ENCODE measurements at regions of chr2 and their contacts with region 1.

Region 1: DNA sequence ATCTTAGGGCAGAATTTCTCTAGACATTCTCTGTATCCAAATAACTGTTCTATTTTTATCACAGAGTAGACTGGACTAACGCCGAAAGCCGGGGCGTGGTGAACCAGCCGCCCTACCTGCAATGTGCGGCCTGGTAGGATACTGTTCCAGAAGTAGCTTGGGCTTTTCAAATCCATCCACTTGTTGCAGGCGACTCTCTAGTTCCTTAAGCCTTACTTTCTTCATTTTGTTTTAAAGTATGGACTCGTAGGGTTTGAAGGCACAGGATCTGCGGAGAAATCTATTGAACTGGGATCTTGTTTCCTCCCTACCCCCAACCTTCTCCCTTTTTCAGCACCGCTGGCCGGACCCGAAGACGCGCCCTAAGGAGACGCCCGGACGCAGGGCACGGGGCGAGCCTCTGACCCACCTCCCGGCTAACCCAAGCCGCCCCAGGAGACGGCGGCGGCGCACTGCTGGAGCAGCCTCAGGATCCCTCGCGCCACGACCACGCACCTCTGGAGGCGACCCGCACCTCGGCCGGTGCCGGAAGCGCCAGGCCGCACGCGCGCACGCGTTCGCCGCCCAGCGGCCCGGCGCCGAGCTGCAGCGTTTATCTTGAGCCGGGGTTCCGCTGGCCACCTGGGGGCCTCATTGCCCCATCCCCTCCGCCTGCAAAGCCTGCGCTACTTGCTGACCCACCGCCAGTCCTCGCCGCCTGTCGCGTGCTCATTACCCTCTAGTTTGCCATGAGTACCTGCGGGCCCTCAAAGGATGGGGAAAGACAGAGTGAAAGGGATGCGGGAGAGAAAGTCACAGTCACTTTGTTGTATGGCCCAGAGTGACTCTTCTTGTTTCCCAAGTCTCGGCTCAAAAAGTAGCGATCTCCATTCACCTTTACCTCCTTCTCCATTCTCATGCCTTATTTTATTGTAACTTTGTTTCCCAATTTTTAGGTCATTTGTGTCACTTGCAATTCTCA is at the start of gene METTL5:
- DNase-seq: peak; percentile 55 to 90 (median 71)
- ATAC-seq: peak; percentile 80
- H3K4me3 ChIP-seq: peak within 1 kb of the TSS; percentile 80
- H3K4me3 Mint-ChIP-seq: peak within 1 kb of the TSS; percentile 82 to 99 (median 91)
- H3K27ac ChIP-seq: peak within 1 kb of the TSS; percentile 85
- H3K27ac Mint-ChIP-seq: peak within 1 kb of the TSS; percentile 84 to 96 (median 89)
- H3K4me1 ChIP-seq: peaks cover 19 to 28% of the 10 kb centered on the region in 2 donors
- H3K4me1 Mint-ChIP-seq: peaks cover 46 to 75% (median 65%) of the 10 kb centered on the region in 7 donors
- H3K27me3 ChIP-seq: no peaks in the 10 kb centered on the region
- H3K27me3 Mint-ChIP-seq: no peaks in the 10 kb centered on the region
- total RNA-seq, gene METTL5: 21.1 to 52.9 (median 44.2) TPM

Region 2: DNA sequence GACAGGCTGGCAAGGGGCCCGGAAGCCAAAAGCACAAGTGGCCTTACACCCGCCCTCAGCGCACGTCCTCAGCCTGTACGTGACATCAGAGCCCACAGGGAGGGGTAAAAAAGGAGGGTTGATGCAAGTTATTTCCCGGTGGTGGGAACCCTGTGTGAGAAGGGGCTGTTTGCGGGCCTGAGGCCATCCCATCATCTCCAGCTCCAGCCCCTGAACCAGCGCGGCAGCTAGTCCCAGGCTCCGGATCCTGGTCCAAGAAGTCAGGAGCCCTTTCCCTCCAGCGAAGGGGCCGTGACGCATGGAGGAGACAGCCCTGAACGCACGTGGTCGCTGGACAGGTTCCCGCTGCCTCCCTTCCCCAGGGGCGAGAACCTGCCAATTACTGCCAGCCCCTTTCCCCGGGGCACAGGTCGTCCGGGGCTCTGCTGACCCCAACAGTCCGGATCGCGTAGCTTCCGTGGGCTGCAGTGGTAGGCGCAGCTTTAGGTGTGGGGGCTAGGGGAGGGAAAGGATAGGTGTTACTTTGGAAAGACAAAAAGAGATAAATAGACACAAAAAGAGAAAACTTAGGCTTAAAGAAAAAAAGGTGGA is 461.0 kb before region 1 on chr2:
- CTCF ChIA-PET with region 1: no interaction called
- POLR2A ChIA-PET with region 1: no interaction called
- intact Hi-C with region 1: loop called (anchors 10 kb)
- DNase-seq: peak in 8 of 9 donors; percentile 14 to 49 (median 38)
- ATAC-seq: peak; percentile 58
- H3K4me3 ChIP-seq: peak overlapping the region; percentile 89
- H3K4me3 Mint-ChIP-seq: peak overlapping the region; percentile 87 to 98 (median 94)
- H3K27ac ChIP-seq: no peak overlapping the region
- H3K27ac Mint-ChIP-seq: peak overlapping the region in 4 of 9 donors; percentile 14 to 88 (median 55)
- H3K4me1 ChIP-seq: peaks cover 11 to 18% of the 10 kb centered on the region in 2 donors
- H3K4me1 Mint-ChIP-seq: peaks cover 17 to 37% (median 29%) of the 10 kb centered on the region in 7 donors
- H3K27me3 ChIP-seq: peaks cover 4 to 15% of the 10 kb centered on the region in 2 donors
- H3K27me3 Mint-ChIP-seq: peaks cover 42 to 60% (median 49%) of the 10 kb centered on the region in 5 donors

Region 3: GRCh38 chr2:169573160-169573973 is 251.3 kb before region 1 on chr2 and contains the start of gene FASTKD1:
- CTCF ChIA-PET with region 1: no interaction called
- POLR2A ChIA-PET with region 1: no interaction called
- intact Hi-C with region 1: loop called (anchors 1 kb)
- DNase-seq: peak; percentile 55 to 88 (median 76)
- ATAC-seq: peak; percentile 100
- H3K4me3 ChIP-seq: peak within 1 kb of the TSS; percentile 93
- H3K4me3 Mint-ChIP-seq: peak within 1 kb of the TSS; percentile 88 to 99 (median 94)
- H3K27ac ChIP-seq: peak within 1 kb of the TSS; percentile 80
- H3K27ac Mint-ChIP-seq: peak within 1 kb of the TSS; percentile 74 to 95 (median 91)
- H3K4me1 ChIP-seq: peaks cover 4 to 5% of the 10 kb centered on the region in 2 donors
- H3K4me1 Mint-ChIP-seq: peaks cover 14 to 32% (median 24%) of the 10 kb centered on the region in 7 donors
- H3K27me3 ChIP-seq: no peaks in the 10 kb centered on the region
- H3K27me3 Mint-ChIP-seq: peaks cover 0 to 4% (median 0%) of the 10 kb centered on the region in 5 donors
- total RNA-seq, gene FASTKD1: 13.5 to 43.5 (median 31.0) TPM

Region 4: GRCh38 chr2:169694113-169694903 is 130.3 kb before region 1 on chr2 and contains the starts of genes CFAP210 and PHOSPHO2:
- CTCF ChIA-PET with region 1: interaction called, 4 read pairs
- POLR2A ChIA-PET with region 1: no interaction called
- intact Hi-C with region 1: loop called (anchors 1 kb)
- DNase-seq: peak; percentile 96 to 99 (median 98)
- ATAC-seq: peak; percentile 96
- H3K4me3 ChIP-seq: peak within 1 kb of the TSS; percentile 61
- H3K4me3 Mint-ChIP-seq: peak within 1 kb of the TSS; percentile 86 to 98 (median 90)
- H3K27ac ChIP-seq: peak within 1 kb of the TSS; percentile 87
- H3K27ac Mint-ChIP-seq: peak within 1 kb of the TSS; percentile 88 to 100 (median 99)
- H3K4me1 ChIP-seq: peaks cover 5 to 6% of the 10 kb centered on the region in 2 donors
- H3K4me1 Mint-ChIP-seq: peaks cover 5 to 22% (median 18%) of the 10 kb centered on the region in 7 donors
- H3K27me3 ChIP-seq: no peaks in the 10 kb centered on the region
- H3K27me3 Mint-ChIP-seq: peaks cover 0 to 30% (median 10%) of the 10 kb centered on the region in 5 donors
- total RNA-seq, gene CFAP210: 1.0 to 3.6 TPM in 2 of 5 experiments, not detected in the others
- total RNA-seq, gene PHOSPHO2: 4.5 to 9.5 (median 7.5) TPM

Region 5: DNA sequence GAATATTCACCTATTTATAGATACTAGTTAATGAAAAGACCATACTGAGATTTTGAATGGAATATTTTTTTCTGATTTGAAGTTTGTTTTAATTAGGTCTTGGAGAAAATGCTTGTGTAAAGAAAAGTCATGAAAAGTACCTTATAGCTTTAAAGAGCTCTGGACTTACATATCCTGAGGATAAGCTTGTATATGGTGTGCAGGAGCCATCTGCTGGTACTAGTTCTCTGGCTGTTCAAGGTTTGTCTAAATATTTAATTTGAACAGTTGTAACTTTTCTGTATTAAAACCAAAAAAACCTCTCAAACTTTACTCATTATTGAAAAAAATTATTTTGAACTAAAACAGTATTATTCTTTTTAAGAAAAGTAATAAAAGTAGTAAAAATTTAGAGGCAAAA is 52.7 kb after region 1 on chr2:
- CTCF ChIA-PET with region 1: interaction called, 7 read pairs
- POLR2A ChIA-PET with region 1: no interaction called
- intact Hi-C with region 1: loop called (anchors 1 kb)
- DNase-seq: peak in 1 of 9 donors; percentile 11
- ATAC-seq: no peak
- H3K4me3 ChIP-seq: no peak overlapping the region
- H3K4me3 Mint-ChIP-seq: no peak overlapping the region
- H3K27ac ChIP-seq: no peak overlapping the region
- H3K27ac Mint-ChIP-seq: no peak overlapping the region
- H3K4me1 ChIP-seq: no peaks in the 10 kb centered on the region
- H3K4me1 Mint-ChIP-seq: peaks cover 0 to 10% (median 5%) of the 10 kb centered on the region in 7 donors
- H3K27me3 ChIP-seq: no peaks in the 10 kb centered on the region
- H3K27me3 Mint-ChIP-seq: no peaks in the 10 kb centered on the region

Region 6: DNA sequence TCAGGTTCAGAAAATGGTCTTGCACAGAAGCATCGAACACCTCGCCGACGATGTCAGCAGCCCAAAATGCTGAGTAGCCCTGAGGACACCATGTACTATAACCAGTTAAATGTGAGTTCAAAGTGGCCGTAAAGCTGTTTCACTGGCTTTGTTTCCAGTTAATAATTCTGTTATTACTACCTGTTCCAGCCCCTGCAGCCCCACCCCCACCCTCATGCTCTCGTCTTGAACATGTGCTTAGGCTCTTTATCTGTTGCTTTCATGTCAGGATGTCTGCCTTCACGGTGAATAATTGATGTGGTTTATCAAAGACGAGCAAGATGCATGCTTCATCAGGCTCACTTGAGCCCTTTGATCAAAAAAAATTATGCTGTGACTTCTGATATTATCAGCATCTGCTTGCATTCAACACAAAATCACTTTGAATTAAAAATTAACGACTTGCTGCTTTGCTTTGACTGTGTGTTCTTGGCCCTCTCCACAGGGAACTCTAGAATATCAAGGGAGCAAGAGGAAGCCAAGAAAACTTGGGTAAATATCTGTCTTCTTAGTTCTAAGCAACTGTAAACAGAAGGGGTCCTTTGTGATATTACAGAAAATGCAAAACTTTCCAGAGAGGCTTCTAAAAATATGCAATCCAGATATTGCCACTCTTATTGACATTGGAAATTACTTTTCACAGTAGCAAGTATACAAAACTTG is 827.1 kb after region 1 on chr2:
- CTCF ChIA-PET with region 1: no interaction called
- POLR2A ChIA-PET with region 1: no interaction called
- intact Hi-C with region 1: loop called in 1 of 2 experiments (anchors 5 kb)
- DNase-seq: peak in 7 of 9 donors; percentile 74 to 89 (median 84)
- ATAC-seq: peak; percentile 99
- H3K4me3 ChIP-seq: no peak overlapping the region
- H3K4me3 Mint-ChIP-seq: peak overlapping the region; percentile 44 to 80 (median 64)
- H3K27ac ChIP-seq: no peak overlapping the region
- H3K27ac Mint-ChIP-seq: peak overlapping the region in 7 of 9 donors; percentile 12 to 87 (median 25)
- H3K4me1 ChIP-seq: peaks cover 11 to 23% of the 10 kb centered on the region in 2 donors
- H3K4me1 Mint-ChIP-seq: peaks cover 17 to 35% (median 32%) of the 10 kb centered on the region in 7 donors
- H3K27me3 ChIP-seq: no peaks in the 10 kb centered on the region
- H3K27me3 Mint-ChIP-seq: peaks cover 0 to 20% (median 9%) of the 10 kb centered on the region in 5 donors

Measured in naive thymus-derived CD4-positive, alpha-beta T cell (primary cell).